ENCODE measurements at regions of chr3 and their contacts with region 1.

Region 1: GRCh38 chr3:52220380-52221026 is 4.9 kb downstream of the TLR9 start:
- DNase-seq: peak; percentile 92
- ATAC-seq: peak; percentile 57
- H3K4me3 Mint-ChIP-seq: peak overlapping the region; percentile 75
- H3K27ac Mint-ChIP-seq: peak overlapping the region; percentile 93
- H3K4me1 Mint-ChIP-seq: peaks cover 64% of the 10 kb centered on the region
- H3K27me3 Mint-ChIP-seq: no peaks in the 10 kb centered on the region

Region 2: GRCh38 chr3:52128118-52128683 is 92.3 kb before region 1 on chr3:
- POLR2A ChIA-PET with region 1: no interaction called
- DNase-seq: no peak
- ATAC-seq: no peak
- H3K4me3 Mint-ChIP-seq: no peak overlapping the region
- H3K27ac Mint-ChIP-seq: no peak overlapping the region
- H3K4me1 Mint-ChIP-seq: peaks cover 9% of the 10 kb centered on the region
- H3K27me3 Mint-ChIP-seq: no peaks in the 10 kb centered on the region

Region 3: DNA sequence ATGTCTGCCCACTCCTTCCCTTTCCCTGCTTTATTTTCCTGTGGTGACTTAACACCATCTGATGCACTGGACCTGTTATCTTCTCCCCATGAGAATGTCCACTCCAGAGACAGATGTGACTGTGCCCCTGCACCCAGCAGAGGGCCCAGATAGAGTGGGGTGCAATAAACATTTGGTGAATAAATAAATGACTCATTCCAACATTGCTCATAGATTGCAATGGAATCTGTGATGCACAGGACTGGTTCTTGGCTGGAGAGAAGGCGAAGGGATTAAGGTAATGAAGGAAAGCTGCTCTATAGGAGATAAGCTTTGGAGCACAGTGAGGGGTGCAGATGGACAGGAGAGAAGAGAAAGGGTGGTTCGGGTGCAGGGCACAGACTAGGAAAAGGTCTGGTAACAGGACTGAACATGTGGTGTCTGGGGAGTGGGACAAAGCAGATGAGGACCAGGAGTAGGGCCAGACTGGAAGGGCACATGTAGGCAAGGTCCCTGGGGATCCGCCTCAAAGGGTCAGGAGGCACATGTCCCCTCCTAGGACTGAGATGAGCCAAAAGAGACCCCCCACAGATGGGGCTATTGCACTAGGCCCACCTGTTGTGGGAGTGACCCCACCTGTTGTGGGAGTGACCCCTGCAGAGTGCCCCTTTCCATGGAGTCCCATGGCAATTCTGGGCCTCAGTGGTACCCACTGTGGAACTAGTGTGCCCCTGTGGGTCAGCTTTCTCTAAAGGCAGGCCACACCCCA is 48.8 kb before region 1 on chr3:
- POLR2A ChIA-PET with region 1: no interaction called
- DNase-seq: no peak
- ATAC-seq: no peak
- H3K4me3 Mint-ChIP-seq: no peak overlapping the region
- H3K27ac Mint-ChIP-seq: peak overlapping the region; percentile 3
- H3K4me1 Mint-ChIP-seq: peaks cover 7% of the 10 kb centered on the region
- H3K27me3 Mint-ChIP-seq: no peaks in the 10 kb centered on the region

Region 4: GRCh38 chr3:52231502-52232293 is 11.2 kb after region 1 on chr3:
- POLR2A ChIA-PET with region 1: interaction called, 128 read pairs
- DNase-seq: peak; percentile 94
- ATAC-seq: peak; percentile 78
- H3K4me3 Mint-ChIP-seq: peak overlapping the region; percentile 52
- H3K27ac Mint-ChIP-seq: peak overlapping the region; percentile 75
- H3K4me1 Mint-ChIP-seq: peaks cover 44% of the 10 kb centered on the region
- H3K27me3 Mint-ChIP-seq: no peaks in the 10 kb centered on the region

Region 5: DNA sequence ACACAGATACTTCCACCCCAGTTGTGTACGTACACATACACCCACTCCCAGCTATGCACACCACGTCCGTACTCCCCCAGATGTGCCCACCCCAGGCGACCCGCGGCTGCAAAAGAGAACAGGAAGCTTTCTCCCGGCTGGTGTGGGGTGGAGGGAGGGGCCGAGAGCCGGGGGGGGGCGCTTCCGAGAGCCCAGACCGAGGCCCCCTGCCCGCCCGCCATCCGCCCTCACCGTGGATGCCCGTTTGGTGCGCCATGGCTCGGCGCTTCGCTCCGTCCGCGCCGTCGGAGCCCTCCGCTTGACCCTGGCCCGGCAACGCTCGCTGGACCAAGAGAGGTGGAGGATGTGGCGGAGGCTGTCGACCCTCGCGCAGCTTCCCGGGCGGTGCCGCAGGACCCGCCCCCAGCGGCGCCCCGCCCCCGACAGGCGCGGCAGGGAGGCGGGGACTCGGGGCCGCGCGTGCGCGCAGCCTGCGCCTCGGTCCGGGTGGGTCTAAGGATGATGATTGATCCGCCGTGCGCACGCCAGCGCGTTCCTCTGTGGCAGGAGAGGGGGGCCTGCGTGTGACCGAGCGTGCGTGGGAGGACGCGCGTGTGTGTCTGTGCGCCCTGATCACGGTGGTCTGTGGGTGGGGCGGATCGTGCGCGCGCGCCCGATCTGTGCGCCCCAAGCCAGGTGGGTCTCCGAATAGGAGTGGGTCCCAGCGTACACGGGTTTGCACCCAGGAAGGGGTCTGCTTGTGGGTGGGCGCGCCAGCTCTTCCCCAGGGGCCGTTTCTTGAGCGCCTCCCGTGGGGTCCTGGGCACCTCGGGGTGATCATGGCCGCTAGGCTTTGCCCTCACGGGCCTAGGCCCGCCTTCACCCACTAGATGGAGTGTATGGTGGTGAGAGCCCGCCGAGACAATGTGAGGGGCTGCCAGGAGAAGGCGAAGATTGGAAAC is 18.5 kb after region 1 on chr3 and contains the start of gene TWF2:
- POLR2A ChIA-PET with region 1: interaction called, 128 read pairs
- DNase-seq: peak; percentile 98
- ATAC-seq: peak; percentile 72
- H3K4me3 Mint-ChIP-seq: peak within 1 kb of the TSS; percentile 99
- H3K27ac Mint-ChIP-seq: peak within 1 kb of the TSS; percentile 96
- H3K4me1 Mint-ChIP-seq: peaks cover 57% of the 10 kb centered on the region
- H3K27me3 Mint-ChIP-seq: no peaks in the 10 kb centered on the region
- total RNA-seq, gene TWF2: 118 to 122 TPM

Region 6: DNA sequence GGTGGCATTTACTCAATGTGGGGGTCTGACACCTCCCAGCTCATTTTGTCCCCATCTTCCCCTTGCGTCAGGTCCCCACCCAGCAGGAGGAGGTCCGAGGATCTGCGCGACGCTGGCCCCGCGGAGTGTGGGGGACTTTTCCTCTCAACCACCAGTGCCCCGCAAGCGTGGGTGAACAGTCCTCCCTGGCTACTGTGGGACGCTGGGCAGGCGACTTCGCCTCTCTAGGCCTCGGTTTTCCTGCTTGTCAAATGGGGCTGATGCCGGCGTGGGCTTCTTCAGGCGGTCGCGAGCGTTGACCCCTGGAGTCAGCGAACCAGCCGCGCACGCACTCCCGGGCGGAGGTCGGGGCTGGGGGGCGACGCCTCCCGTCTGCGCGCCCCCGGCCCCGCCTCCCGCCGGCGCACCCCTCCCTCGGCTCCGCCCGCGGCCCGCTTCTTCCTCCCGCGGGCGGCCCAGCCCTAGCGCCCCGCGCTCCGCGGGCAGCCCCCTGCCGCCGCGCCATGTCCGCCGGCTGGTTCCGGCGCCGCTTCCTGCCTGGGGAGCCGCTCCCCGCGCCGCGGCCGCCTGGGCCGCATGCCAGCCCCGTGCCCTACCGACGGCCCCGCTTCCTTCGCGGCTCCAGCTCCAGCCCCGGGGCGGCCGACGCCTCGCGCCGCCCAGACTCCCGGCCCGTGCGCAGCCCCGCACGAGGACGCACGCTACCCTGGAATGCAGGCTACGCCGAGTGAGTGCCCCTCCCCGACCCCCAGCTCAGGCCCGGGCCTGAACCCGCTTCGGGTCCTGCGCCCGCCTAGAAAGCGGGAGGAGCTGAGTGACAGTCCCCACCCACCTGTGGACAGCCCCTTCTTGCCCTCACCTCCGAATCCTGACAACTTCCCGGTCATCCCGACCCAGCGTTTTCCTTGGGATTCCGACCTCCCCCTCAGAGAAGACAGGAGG is 25.1 kb after region 1 on chr3 and contains the start of gene PPM1M:
- POLR2A ChIA-PET with region 1: interaction called, 128 read pairs
- DNase-seq: peak; percentile 81
- ATAC-seq: peak; percentile 57
- H3K4me3 Mint-ChIP-seq: peak within 1 kb of the TSS; percentile 91
- H3K27ac Mint-ChIP-seq: peak within 1 kb of the TSS; percentile 94
- H3K4me1 Mint-ChIP-seq: peaks cover 63% of the 10 kb centered on the region
- H3K27me3 Mint-ChIP-seq: no peaks in the 10 kb centered on the region
- total RNA-seq, gene PPM1M: 101 to 105 TPM

Region 7: GRCh38 chr3:52253314-52254304 is 33.1 kb after region 1 on chr3:
- POLR2A ChIA-PET with region 1: interaction called, 27 read pairs
- DNase-seq: peak; percentile 77
- ATAC-seq: peak; percentile 84
- H3K4me3 Mint-ChIP-seq: peak overlapping the region; percentile 86
- H3K27ac Mint-ChIP-seq: peak overlapping the region; percentile 99
- H3K4me1 Mint-ChIP-seq: peaks cover 80% of the 10 kb centered on the region
- H3K27me3 Mint-ChIP-seq: no peaks in the 10 kb centered on the region

Region 8: DNA sequence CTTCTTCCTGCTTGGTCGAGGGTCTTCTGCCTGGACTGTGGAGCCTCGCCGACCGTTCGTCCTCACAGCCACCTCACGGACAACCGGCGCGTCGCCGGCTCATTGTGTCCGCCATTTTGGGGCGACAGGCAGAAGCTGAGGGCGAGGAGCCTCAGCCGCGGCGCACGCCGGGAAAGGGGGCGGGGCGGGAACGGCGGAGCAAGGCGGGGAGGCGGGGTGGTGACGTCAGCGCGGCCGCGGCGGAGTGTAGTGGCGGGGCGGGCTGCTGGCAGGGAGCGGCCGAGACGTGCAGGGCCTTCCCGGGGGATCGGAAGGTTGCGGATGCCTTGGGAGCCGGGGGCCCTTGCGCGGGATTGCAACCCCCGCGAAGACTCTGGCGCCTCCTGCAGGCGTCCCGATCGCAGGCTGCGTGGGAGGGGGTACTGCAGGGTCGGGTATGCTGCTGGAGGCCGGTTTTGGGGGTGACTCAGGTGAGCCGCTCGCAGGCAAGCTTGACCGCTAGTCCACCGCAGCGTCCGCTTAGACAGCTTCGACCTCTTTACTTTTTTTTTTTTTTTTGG is 58.1 kb after region 1 on chr3 and contains the start of gene WDR82:
- POLR2A ChIA-PET with region 1: interaction called, 50 read pairs
- DNase-seq: peak; percentile 100
- ATAC-seq: peak; percentile 70
- H3K4me3 Mint-ChIP-seq: peak within 1 kb of the TSS; percentile 98
- H3K27ac Mint-ChIP-seq: peak within 1 kb of the TSS; percentile 99
- H3K4me1 Mint-ChIP-seq: peaks cover 51% of the 10 kb centered on the region
- H3K27me3 Mint-ChIP-seq: no peaks in the 10 kb centered on the region
- total RNA-seq, gene WDR82: 134 to 140 TPM

Region 9: DNA sequence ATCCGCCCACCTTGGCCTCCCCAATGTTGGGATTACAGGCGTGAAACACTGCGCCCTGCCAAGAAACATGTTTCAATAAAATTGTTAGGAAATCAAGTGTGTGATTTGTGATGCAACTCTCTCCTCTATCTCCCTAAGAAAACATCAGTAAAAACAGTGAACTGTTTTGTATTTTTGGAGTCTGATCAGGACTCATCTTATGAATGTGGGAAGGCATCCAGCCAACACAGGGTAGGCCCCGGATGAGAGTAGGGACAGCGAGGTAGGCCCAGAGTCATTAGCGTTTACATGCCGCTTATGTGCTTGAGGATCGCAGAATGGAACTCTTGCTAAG is 66.2 kb after region 1 on chr3:
- POLR2A ChIA-PET with region 1: interaction called, 10 read pairs
- DNase-seq: peak; percentile 12
- ATAC-seq: no peak
- H3K4me3 Mint-ChIP-seq: peak overlapping the region; percentile 98
- H3K27ac Mint-ChIP-seq: peak overlapping the region; percentile 100
- H3K4me1 Mint-ChIP-seq: peaks cover 49% of the 10 kb centered on the region
- H3K27me3 Mint-ChIP-seq: no peaks in the 10 kb centered on the region

Region 10: GRCh38 chr3:52366527-52366926 is 146.0 kb after region 1 on chr3:
- POLR2A ChIA-PET with region 1: no interaction called
- DNase-seq: no peak
- ATAC-seq: no peak
- H3K4me3 Mint-ChIP-seq: no peak overlapping the region
- H3K27ac Mint-ChIP-seq: no peak overlapping the region
- H3K4me1 Mint-ChIP-seq: no peaks in the 10 kb centered on the region
- H3K27me3 Mint-ChIP-seq: no peaks in the 10 kb centered on the region

Region 11: GRCh38 chr3:52507359-52507758 is 286.9 kb after region 1 on chr3:
- POLR2A ChIA-PET with region 1: no interaction called
- DNase-seq: no peak
- ATAC-seq: no peak
- H3K4me3 Mint-ChIP-seq: no peak overlapping the region
- H3K27ac Mint-ChIP-seq: no peak overlapping the region
- H3K4me1 Mint-ChIP-seq: no peaks in the 10 kb centered on the region
- H3K27me3 Mint-ChIP-seq: no peaks in the 10 kb centered on the region

Measured in activated naive CD8-positive, alpha-beta T cell treated with anti-CD3 and anti-CD28 coated beads, Interleukin-2, amount 10 ng/mL, durations not matched to agents 7 days and 5 days (primary cell).